Activated CD4-positive, alpha-beta memory T cell treated with anti-CD3 and anti-CD28 coated beads for 36 hours (primary cell): ENCODE measurements at regions of chr5 and their contacts with region 1.

Region 1: GRCh38 chr5:95646554-95647431 is at the start of gene RFESD:
- DNase-seq: peak; percentile 98
- H3K4me3 Mint-ChIP-seq: peak within 1 kb of the TSS; percentile 78
- H3K27ac Mint-ChIP-seq: peak within 1 kb of the TSS; percentile 89
- H3K4me1 Mint-ChIP-seq: peaks cover 25% of the 10 kb centered on the region
- H3K27me3 Mint-ChIP-seq: no peaks in the 10 kb centered on the region
- total RNA-seq, gene RFESD: 6.9 to 8.8 TPM

Region 2: GRCh38 chr5:95591490-95591901 is 55.3 kb before region 1 on chr5:
- CTCF ChIA-PET with region 1: no interaction called
- POLR2A ChIA-PET with region 1: no interaction called
- intact Hi-C with region 1: loop called (anchors 1 kb)
- DNase-seq: no peak
- H3K4me3 Mint-ChIP-seq: no peak overlapping the region
- H3K27ac Mint-ChIP-seq: no peak overlapping the region
- H3K4me1 Mint-ChIP-seq: peaks cover 30% of the 10 kb centered on the region
- H3K27me3 Mint-ChIP-seq: no peaks in the 10 kb centered on the region

Region 3: DNA sequence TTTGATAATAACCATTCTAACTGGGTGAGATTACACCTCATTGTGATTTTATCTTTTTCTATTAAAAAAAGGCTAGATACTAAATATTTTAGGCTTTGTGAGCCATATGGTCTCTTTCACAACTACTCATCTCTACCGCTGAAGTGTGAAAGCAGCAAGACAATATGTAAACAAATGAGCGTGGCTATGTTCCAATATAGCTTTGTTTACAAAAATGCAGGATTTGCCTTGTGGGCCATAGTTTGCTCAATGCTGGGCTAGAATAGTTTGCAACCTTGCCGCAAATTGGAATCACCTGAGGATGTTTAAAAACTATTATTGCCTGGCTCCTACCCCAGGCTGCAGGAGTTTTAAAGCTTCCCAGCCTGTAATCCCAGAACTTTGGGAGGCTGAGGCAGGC is 37.1 kb before region 1 on chr5:
- CTCF ChIA-PET with region 1: no interaction called
- POLR2A ChIA-PET with region 1: no interaction called
- intact Hi-C with region 1: no loop called
- DNase-seq: no peak
- H3K4me3 Mint-ChIP-seq: no peak overlapping the region
- H3K27ac Mint-ChIP-seq: no peak overlapping the region
- H3K4me1 Mint-ChIP-seq: peaks cover 9% of the 10 kb centered on the region
- H3K27me3 Mint-ChIP-seq: no peaks in the 10 kb centered on the region

Region 4: GRCh38 chr5:95664204-95664786 is 17.5 kb after region 1 on chr5:
- CTCF ChIA-PET with region 1: interaction called, 18 read pairs
- POLR2A ChIA-PET with region 1: no interaction called
- intact Hi-C with region 1: no loop called
- DNase-seq: no peak
- H3K4me3 Mint-ChIP-seq: no peak overlapping the region
- H3K27ac Mint-ChIP-seq: no peak overlapping the region
- H3K4me1 Mint-ChIP-seq: peaks cover 1% of the 10 kb centered on the region
- H3K27me3 Mint-ChIP-seq: no peaks in the 10 kb centered on the region

Region 5: DNA sequence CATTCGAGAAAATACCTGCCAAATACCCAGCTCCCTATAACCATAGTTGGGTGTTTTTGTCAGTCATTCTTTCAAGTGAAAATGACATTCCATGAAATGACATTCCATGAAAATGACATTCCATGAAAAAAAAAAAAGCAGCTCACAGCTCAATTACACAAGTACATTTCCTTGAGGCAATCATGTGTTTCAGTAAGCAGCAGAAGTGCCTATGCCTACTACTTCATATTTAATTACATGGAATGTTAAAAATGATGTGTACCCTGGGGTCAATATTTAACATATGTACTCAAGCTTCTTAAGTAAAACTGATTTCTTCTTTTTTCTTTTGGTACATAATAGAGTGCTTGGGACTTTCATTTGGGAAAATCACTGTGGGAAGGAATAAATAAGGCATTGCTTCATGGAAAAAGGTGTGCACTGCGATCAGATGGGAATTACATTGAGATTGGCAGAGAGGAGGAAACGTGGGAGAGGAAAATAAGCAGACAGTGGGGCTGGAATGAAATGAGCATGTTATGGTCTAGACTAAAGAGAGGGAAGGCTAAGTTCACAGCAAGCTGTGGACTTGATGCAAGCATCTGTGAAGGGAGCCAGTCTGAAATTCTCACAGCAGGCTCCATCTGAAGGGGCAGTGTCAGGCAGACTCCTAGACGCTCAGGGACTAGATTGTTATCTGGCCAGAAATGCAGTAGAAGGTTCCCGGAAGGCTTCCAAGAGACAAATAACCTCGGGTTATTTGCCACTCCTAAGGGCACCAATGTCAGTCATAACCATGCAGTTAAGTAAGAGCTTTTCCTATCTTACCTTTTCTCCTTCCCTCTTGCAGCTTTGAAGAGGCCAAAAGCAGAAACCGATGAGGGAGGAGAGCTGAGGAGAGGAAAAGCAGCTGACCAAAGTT is 51.2 kb after region 1 on chr5:
- CTCF ChIA-PET with region 1: no interaction called
- POLR2A ChIA-PET with region 1: no interaction called
- intact Hi-C with region 1: no loop called
- DNase-seq: no peak
- H3K4me3 Mint-ChIP-seq: no peak overlapping the region
- H3K27ac Mint-ChIP-seq: no peak overlapping the region
- H3K4me1 Mint-ChIP-seq: no peaks in the 10 kb centered on the region
- H3K27me3 Mint-ChIP-seq: peaks cover 13% of the 10 kb centered on the region

Region 6: DNA sequence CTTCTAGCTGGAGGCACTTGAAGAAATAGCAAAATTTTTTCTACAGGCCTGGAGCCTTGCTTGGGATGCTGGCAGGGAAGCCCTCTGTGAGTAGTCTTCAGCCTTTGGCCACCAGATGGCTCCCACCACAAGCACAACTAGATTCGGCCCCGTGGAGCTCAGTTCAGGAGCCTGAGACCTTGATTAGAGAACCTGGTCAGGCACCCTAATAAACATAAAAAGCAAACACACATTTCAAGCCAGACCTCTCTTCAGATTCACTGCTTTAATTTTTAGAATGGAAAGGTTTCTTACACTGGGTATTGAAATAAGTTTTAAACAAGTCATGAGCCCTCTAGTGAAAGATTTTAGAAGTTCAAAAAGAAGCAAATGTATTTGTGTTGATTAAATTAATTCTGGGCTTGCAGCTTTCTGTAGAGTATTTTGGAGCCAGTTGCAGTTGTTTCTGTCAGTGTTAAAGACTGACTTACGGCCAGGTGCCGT is 134.3 kb after region 1 on chr5:
- CTCF ChIA-PET with region 1: interaction called, 56 read pairs
- POLR2A ChIA-PET with region 1: no interaction called
- intact Hi-C with region 1: loop called (anchors 1 kb)
- DNase-seq: peak; percentile 81
- H3K4me3 Mint-ChIP-seq: peak overlapping the region; percentile 26
- H3K27ac Mint-ChIP-seq: no peak overlapping the region
- H3K4me1 Mint-ChIP-seq: peaks cover 4% of the 10 kb centered on the region
- H3K27me3 Mint-ChIP-seq: no peaks in the 10 kb centered on the region

Region 7: GRCh38 chr5:95846554-95847260 is 199.9 kb after region 1 on chr5:
- CTCF ChIA-PET with region 1: interaction called, 12 read pairs
- POLR2A ChIA-PET with region 1: no interaction called
- intact Hi-C with region 1: loop called (anchors 1 kb)
- DNase-seq: peak; percentile 76
- H3K4me3 Mint-ChIP-seq: no peak overlapping the region
- H3K27ac Mint-ChIP-seq: peak overlapping the region; percentile 62
- H3K4me1 Mint-ChIP-seq: peaks cover 15% of the 10 kb centered on the region
- H3K27me3 Mint-ChIP-seq: no peaks in the 10 kb centered on the region

Region 8: GRCh38 chr5:95900383-95900958 is 253.7 kb after region 1 on chr5:
- CTCF ChIA-PET with region 1: no interaction called
- POLR2A ChIA-PET with region 1: no interaction called
- intact Hi-C with region 1: no loop called
- DNase-seq: no peak
- H3K4me3 Mint-ChIP-seq: no peak overlapping the region
- H3K27ac Mint-ChIP-seq: no peak overlapping the region
- H3K4me1 Mint-ChIP-seq: peaks cover 8% of the 10 kb centered on the region
- H3K27me3 Mint-ChIP-seq: no peaks in the 10 kb centered on the region

Region 9: GRCh38 chr5:96662725-96663513 is 1016.1 kb after region 1 on chr5:
- CTCF ChIA-PET with region 1: no interaction called
- POLR2A ChIA-PET with region 1: no interaction called
- intact Hi-C with region 1: loop called (anchors 2 kb)
- DNase-seq: peak; percentile 94
- H3K4me3 Mint-ChIP-seq: peak overlapping the region; percentile 99
- H3K27ac Mint-ChIP-seq: peak overlapping the region; percentile 98
- H3K4me1 Mint-ChIP-seq: peaks cover 45% of the 10 kb centered on the region
- H3K27me3 Mint-ChIP-seq: peaks cover 14% of the 10 kb centered on the region